ENCODE measurements at regions of chr9 and their contacts with region 1.

Region 1: DNA sequence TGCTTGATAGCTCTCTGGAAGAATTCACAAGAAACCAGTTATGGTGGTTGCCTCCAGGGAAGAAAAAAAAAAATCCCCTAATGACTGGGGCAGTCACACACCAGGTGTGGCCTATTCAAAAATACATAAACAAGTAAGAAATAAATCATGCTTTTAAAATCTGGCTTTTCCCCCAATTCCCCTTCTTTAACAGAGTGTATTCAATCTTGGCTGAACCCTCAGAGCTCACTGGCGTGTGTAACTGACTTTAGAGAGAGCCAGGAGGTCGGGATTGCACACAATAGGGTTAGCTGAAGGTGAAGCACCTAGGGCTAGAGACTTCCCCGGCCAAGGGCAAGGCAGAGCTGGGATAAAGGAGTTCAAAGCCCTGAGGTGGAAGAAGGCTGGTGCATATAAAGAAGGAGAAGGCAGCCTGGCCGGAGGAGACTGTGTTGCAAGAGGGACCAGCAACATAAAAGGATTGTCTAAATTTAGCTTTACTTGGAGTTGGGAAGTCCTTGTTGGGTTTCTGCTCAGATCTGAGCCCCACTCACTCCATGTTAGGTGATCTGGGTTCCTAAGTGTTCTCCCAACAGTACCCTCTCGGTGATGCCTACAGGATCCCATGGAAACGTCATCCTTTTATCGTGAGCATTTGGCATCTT is 19.7 kb downstream of the FNBP1 start:
- DNase-seq: peak; percentile 85
- ATAC-seq: peak; percentile 82
- H3K4me3 ChIP-seq: peak overlapping the region in 3 of 5 experiments; percentile 5 to 45 (median 28)
- H3K4me3 Mint-ChIP-seq: peak overlapping the region; percentile 88
- H3K27ac ChIP-seq: peak overlapping the region; percentile 87 to 95
- H3K27ac Mint-ChIP-seq: peak overlapping the region; percentile 98
- H3K4me1 ChIP-seq: peaks cover 72 to 81% of the 10 kb centered on the region in 2 donors
- H3K4me1 Mint-ChIP-seq: peaks cover 86% of the 10 kb centered on the region
- H3K27me3 ChIP-seq: no peaks in the 10 kb centered on the region
- H3K27me3 Mint-ChIP-seq: no peaks in the 10 kb centered on the region
- CTCF ChIP-seq: no peak

Region 2: DNA sequence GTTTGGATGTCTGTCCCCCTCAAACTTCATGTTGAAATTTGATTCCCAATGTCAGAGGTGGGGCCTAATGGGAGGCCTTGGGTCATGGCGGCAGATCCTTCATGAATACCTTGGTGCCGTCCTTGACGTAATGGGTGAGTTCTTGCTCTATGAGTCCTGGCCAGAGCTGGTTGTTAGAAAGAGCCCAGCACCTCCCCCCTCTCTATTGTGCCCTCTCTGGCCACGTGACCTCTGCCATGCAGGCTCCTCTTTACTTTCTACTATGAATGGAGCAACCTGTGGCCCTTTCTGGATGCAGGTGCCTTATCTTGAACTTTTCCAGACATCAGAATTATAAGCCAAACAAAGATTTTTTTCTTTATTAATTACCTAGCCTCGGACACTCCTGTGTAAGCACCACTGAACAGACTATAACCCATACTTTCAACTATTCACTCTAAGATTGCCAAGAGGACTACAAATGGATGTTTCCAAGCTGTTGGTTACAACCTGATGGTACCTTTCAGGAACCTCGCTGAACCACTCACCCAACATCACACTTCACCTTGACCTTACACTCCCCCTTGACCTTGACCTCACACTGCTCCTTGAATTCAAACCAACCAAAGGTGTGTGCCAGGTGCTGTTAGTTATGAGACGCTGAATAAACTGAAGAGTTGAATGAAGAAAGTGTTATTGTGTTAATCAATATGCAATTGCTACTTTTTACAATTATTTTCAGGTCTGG is 20.8 kb before region 1 on chr9:
- CTCF ChIA-PET with region 1: interaction called, 3 read pairs
- POLR2A ChIA-PET with region 1: interaction called, 18 read pairs
- intact Hi-C with region 1: loop called (anchors 2 kb)
- DNase-seq: no peak
- ATAC-seq: no peak
- H3K4me3 ChIP-seq: peak overlapping the region in 1 of 5 experiments; percentile 11
- H3K4me3 Mint-ChIP-seq: peak overlapping the region; percentile 50
- H3K27ac ChIP-seq: peak overlapping the region; percentile 15 to 96
- H3K27ac Mint-ChIP-seq: peak overlapping the region; percentile 89
- H3K4me1 ChIP-seq: peaks cover 53 to 56% of the 10 kb centered on the region in 2 donors
- H3K4me1 Mint-ChIP-seq: peaks cover 63% of the 10 kb centered on the region
- H3K27me3 ChIP-seq: no peaks in the 10 kb centered on the region
- H3K27me3 Mint-ChIP-seq: no peaks in the 10 kb centered on the region
- CTCF ChIP-seq: no peak

Region 3: DNA sequence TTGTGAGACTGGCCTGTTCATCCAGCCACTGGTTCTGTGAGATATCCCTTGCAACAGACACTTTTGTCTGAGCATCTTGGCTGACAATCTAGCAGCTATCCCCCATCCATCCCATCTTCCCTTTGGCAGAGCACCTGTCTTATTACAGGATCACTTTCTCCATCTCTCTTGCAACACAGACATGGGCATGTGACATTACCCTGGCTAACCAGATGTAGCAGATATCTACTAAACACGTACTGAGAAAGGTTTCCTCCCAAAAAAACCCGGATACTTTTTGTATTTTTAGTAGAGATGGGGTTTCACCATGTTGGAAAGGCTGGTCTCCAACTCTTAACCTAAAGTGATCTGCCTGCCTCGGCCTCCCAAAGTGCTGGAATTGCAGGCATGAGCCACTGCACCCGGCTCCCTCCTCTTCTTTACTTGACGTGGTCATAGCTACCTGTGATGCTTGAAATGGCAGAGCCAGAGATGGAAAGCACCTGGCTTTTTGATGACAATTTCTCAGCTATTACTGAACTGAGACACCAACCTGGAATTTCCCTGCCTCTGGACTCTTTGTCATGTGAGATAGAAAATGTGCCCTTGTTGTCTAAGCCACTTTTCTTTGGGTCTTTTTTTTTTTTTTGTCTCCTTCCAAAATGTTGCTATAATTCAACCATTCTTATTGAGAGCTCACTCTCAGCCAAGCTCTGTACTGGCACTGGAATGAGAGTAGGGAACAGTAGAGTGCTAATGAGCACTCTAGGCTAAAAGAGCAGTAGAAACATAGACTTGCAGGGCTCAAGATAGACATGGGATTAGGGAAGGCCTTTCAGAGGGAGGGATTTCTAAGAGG is 12.9 kb before region 1 on chr9:
- CTCF ChIA-PET with region 1: interaction called, 7 read pairs
- POLR2A ChIA-PET with region 1: interaction called, 19 read pairs
- intact Hi-C with region 1: loop called (anchors 1 kb)
- DNase-seq: peak; percentile 91
- ATAC-seq: peak; percentile 65
- H3K4me3 ChIP-seq: no peak overlapping the region
- H3K4me3 Mint-ChIP-seq: peak overlapping the region; percentile 61
- H3K27ac ChIP-seq: peak overlapping the region; percentile 96 to 98
- H3K27ac Mint-ChIP-seq: peak overlapping the region; percentile 93
- H3K4me1 ChIP-seq: peaks cover 67 to 70% of the 10 kb centered on the region in 2 donors
- H3K4me1 Mint-ChIP-seq: peaks cover 74% of the 10 kb centered on the region
- H3K27me3 ChIP-seq: no peaks in the 10 kb centered on the region
- H3K27me3 Mint-ChIP-seq: no peaks in the 10 kb centered on the region
- CTCF ChIP-seq: no peak

Region 4: GRCh38 chr9:130034570-130034969 is 11.3 kb after region 1 on chr9:
- CTCF ChIA-PET with region 1: interaction called, 8 read pairs
- POLR2A ChIA-PET with region 1: interaction called, 20 read pairs
- intact Hi-C with region 1: loop called (anchors 2 kb)
- DNase-seq: no peak
- ATAC-seq: no peak
- H3K4me3 ChIP-seq: no peak overlapping the region
- H3K4me3 Mint-ChIP-seq: peak overlapping the region; percentile 74
- H3K27ac ChIP-seq: peak overlapping the region in 1 of 2 donors; percentile 77
- H3K27ac Mint-ChIP-seq: peak overlapping the region; percentile 82
- H3K4me1 ChIP-seq: peaks cover 83 to 89% of the 10 kb centered on the region in 2 donors
- H3K4me1 Mint-ChIP-seq: peaks cover 83% of the 10 kb centered on the region
- H3K27me3 ChIP-seq: no peaks in the 10 kb centered on the region
- H3K27me3 Mint-ChIP-seq: no peaks in the 10 kb centered on the region
- CTCF ChIP-seq: no peak

Measured in B cell (primary cell).